CD14-positive monocyte (primary cell): ENCODE measurements at regions of chr3 and their contacts with region 1.

Region 1: DNA sequence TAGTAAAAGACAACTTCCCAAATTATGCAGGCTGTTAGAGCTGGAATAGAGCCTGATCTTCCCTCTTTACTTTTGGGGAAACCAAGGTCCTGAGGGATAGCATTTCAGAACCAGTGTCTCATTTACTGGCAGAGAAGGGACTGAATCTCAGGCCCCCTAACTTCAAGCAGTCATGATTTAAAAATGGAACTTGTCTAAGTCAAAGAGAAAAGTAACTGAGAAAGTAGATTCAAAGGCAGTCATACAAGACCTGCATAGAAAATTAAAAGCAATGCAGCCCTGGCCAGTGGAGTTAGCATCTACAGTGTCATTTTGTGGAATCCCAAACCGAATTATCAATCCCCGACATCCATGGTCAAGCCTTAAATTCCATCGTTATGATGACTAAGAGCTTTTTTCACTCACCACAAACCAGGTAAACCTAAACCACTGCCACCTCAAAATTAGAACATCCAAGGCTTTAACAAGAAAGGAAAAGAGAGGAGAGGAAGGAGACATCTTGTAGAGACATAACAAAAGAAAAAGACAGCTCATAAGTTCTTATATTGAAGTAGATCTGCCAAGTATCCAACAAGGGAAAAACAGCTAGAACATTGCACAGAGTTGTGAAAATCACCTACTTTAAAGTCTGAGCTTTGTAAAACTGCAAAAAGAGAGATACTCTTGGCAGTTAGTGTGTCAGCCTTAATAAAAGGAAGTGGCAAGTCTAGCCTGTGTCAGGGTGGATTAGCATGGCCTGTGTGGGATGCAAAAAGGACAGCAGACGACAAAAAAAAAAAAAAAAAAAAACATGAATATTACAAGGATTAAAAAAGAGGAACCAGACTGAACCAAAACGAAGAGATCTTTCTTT is 54.1 kb upstream of the CCR2 start:
- DNase-seq: peak; percentile 66 to 76 (median 69)
- H3K4me3 ChIP-seq: peak overlapping the region in 1 of 3 experiments; percentile 48
- H3K4me3 Mint-ChIP-seq: peak overlapping the region in 1 of 2 donors; percentile 44
- H3K27ac ChIP-seq: peak overlapping the region; percentile 52 to 87
- H3K27ac Mint-ChIP-seq: peak overlapping the region; percentile 93 to 97 (median 95)
- H3K4me1 ChIP-seq: peaks cover 83 to 85% of the 10 kb centered on the region in 2 donors
- H3K4me1 Mint-ChIP-seq: peaks cover 82% of the 10 kb centered on the region
- H3K27me3 ChIP-seq: no peaks in the 10 kb centered on the region
- H3K27me3 Mint-ChIP-seq: peaks cover 0 to 3% (median 3%) of the 10 kb centered on the region in 3 donors
- CTCF ChIP-seq: no peak

Region 2: DNA sequence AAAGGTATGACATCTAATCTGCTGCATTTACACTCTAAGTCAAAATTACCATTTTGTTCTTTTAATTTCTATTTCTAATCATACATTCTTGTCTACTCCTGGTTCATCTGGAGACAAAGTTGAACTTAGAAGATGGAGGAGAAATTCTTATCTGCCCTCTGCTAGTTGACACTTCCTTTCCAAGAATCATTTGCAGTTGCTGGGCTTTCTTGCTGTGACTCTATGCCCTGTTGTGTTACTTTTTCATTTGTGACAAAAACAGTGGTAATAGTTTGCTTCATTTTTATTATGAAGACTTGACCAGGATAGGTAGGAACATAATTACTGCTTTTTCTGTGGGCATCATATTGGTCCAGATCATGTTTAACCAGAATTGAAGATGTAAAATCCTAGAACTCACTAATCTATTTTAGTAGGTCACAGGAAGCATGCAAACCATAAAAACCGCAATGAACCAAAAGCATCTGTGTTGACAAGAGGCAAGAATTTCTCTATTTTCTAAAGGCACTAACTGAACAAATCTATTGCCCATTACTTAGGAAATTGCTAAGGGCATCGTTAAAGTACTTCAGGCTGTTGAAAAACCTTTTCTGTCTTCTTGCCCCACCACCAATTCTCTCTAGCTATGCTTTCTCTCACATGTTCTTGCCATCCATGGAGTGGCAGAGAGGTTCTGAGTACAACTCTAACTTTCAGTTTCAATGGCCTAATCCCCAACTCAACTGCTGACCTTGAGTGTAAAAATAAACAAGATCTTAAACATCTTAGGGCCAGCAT is 49.8 kb after region 1 on chr3:
- intact Hi-C with region 1: loop called in 1 of 2 experiments (anchors 5 kb)
- DNase-seq: peak in 1 of 3 donors; percentile 35
- H3K4me3 ChIP-seq: peak overlapping the region in 1 of 3 experiments; percentile 4
- H3K4me3 Mint-ChIP-seq: peak overlapping the region in 1 of 2 donors; percentile 57
- H3K27ac ChIP-seq: peak overlapping the region in 1 of 2 donors; percentile 62
- H3K27ac Mint-ChIP-seq: peak overlapping the region in 6 of 7 donors; percentile 51 to 86 (median 79)
- H3K4me1 ChIP-seq: peaks cover 49 to 62% of the 10 kb centered on the region in 2 donors
- H3K4me1 Mint-ChIP-seq: peaks cover 58% of the 10 kb centered on the region
- H3K27me3 ChIP-seq: no peaks in the 10 kb centered on the region
- H3K27me3 Mint-ChIP-seq: peaks cover 0 to 5% (median 3%) of the 10 kb centered on the region in 3 donors
- CTCF ChIP-seq: no peak

Region 3: DNA sequence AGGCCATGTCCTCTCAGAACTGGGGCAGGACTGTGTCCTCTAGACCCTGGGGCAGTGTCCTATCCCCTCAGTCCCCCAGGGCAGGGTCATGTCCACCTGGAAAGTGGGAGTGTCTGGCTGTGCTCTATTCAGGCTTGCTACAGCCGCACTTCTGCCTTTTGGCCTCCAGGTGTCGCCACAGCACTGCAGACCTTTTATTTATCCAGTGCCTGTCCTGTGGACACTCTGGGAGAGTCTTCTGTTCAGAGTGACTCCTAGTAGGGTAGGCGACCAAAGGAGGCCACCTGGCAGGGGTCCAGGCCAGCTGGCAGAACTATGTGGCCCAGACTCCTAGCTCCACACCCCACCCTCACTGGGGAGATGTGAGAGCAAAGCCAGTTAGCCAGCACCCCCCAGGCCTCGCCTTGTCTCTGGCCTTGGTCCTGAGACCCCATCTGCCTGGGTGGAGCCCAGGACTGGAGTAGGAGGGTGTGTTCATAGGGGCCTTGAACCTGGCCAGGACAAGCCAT is 405.2 kb after region 1 on chr3:
- intact Hi-C with region 1: no loop called
- DNase-seq: peak; percentile 60 to 69 (median 64)
- H3K4me3 ChIP-seq: no peak overlapping the region
- H3K4me3 Mint-ChIP-seq: no peak overlapping the region
- H3K27ac ChIP-seq: no peak overlapping the region
- H3K27ac Mint-ChIP-seq: no peak overlapping the region
- H3K4me1 ChIP-seq: peaks cover 12 to 16% of the 10 kb centered on the region in 2 donors
- H3K4me1 Mint-ChIP-seq: peaks cover 15% of the 10 kb centered on the region
- H3K27me3 ChIP-seq: peaks cover 8 to 27% of the 10 kb centered on the region in 2 donors
- H3K27me3 Mint-ChIP-seq: peaks cover 32 to 44% (median 40%) of the 10 kb centered on the region in 3 donors
- CTCF ChIP-seq: peak; percentile 97